MCF 10A (cell line): ENCODE measurements at regions of chr14 and their contacts with region 1.

Region 1: GRCh38 chr14:49946320-49947141 is 53.6 kb downstream of the ARF6 start:
- DNase-seq: peak; percentile 72
- H3K4me3 Mint-ChIP-seq: peak overlapping the region; percentile 42
- H3K27ac Mint-ChIP-seq: peak overlapping the region; percentile 81
- H3K4me1 Mint-ChIP-seq: peaks cover 38% of the 10 kb centered on the region
- H3K27me3 Mint-ChIP-seq: no peaks in the 10 kb centered on the region
- CTCF ChIP-seq: no peak

Region 2: GRCh38 chr14:49908432-49908781 is 38.1 kb before region 1 on chr14:
- CTCF ChIA-PET with region 1: interaction called, 6 read pairs
- POLR2A ChIA-PET with region 1: interaction called, 59 read pairs
- intact Hi-C with region 1: no loop called
- DNase-seq: no peak
- H3K4me3 Mint-ChIP-seq: peak overlapping the region; percentile 51
- H3K27ac Mint-ChIP-seq: peak overlapping the region; percentile 97
- H3K4me1 Mint-ChIP-seq: peaks cover 25% of the 10 kb centered on the region
- H3K27me3 Mint-ChIP-seq: no peaks in the 10 kb centered on the region
- CTCF ChIP-seq: no peak

Region 3: DNA sequence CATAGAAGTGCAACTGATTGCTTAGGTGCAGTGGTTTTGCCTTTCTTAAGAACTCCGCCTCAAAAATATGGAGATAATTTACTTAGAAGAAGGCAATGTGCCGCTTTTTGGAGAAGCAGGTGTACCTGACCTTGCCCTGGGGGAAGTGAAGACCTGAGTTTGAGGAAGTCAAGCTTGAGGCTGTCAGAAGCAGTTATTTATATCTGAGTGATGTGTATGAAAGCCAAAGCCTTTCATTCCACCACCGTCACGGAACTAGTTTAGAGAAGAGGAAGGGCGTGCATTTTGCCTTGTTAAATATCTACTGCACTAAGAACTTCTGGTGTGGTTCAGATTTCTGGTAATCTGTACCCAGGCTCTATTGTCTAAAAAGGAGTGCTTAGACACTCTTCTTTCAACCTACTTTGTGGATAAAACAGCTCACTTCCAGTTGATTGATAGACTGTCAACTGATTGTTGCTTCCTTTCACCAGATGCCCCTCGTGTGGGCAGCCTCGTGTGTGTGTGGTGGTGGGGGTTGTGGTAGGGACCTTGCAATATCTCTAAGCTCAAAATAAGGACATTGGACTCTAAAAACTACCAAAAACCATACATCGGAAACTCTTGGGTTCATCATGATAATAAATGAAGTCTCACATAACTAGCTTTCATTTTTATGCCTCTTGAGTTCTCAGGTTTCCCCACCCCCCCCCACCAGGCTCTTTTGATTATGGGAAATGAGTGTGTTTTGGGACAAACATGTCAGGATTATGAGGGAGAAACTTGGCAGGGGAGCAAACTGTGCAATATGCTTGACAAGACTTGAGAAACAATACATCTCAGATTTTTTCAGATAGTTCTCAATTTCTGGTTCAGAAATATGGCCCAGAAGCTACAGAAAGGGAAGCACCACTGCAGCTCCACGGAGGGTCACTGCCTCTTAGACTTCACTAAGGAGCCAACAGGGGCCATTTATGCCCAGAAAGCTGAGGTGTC is 24.9 kb after region 1 on chr14:
- CTCF ChIA-PET with region 1: interaction called, 11 read pairs
- POLR2A ChIA-PET with region 1: interaction called, 189 read pairs
- intact Hi-C with region 1: no loop called
- DNase-seq: peak; percentile 80
- H3K4me3 Mint-ChIP-seq: peak overlapping the region; percentile 58
- H3K27ac Mint-ChIP-seq: peak overlapping the region; percentile 89
- H3K4me1 Mint-ChIP-seq: peaks cover 48% of the 10 kb centered on the region
- H3K27me3 Mint-ChIP-seq: no peaks in the 10 kb centered on the region
- CTCF ChIP-seq: no peak

Region 4: DNA sequence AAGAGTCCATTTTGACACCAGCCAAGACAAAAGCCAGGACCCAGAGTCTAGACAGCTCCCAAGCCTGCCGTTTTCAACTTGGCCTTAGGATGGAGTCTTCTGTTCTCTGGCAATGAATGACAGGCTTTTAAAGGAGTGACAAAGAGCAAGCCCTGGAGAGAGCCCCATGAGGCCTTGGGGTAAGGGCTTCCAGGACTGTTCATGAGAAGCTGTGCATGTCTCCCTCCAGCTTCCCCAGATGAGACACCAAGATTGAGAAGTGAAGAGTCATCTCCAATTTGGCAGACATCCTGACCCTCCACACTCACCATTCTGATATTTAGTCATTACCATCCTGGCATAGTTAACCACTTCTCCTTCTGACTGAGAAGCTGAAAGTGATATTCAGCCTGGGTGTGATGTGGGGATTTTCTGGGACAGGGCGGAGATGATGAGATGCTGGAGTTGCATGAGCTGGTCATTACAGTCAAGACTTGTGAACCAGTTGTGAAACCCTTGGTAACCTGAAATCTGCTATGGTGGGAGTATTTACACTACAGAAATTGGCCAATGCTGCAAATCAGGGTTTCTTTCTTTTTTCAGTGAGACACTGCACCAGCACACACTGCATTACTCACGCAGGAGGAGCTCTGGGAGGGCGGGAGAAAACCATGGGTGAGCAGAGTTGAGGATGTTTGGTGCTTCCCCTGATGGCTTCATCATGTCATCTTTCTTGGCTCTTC is 92.0 kb after region 1 on chr14:
- CTCF ChIA-PET with region 1: interaction called, 7 read pairs
- POLR2A ChIA-PET with region 1: interaction called, 17 read pairs
- intact Hi-C with region 1: no loop called
- DNase-seq: peak; percentile 94
- H3K4me3 Mint-ChIP-seq: peak overlapping the region; percentile 40
- H3K27ac Mint-ChIP-seq: peak overlapping the region; percentile 89
- H3K4me1 Mint-ChIP-seq: peaks cover 43% of the 10 kb centered on the region
- H3K27me3 Mint-ChIP-seq: no peaks in the 10 kb centered on the region
- CTCF ChIP-seq: peak; percentile 16

Region 5: DNA sequence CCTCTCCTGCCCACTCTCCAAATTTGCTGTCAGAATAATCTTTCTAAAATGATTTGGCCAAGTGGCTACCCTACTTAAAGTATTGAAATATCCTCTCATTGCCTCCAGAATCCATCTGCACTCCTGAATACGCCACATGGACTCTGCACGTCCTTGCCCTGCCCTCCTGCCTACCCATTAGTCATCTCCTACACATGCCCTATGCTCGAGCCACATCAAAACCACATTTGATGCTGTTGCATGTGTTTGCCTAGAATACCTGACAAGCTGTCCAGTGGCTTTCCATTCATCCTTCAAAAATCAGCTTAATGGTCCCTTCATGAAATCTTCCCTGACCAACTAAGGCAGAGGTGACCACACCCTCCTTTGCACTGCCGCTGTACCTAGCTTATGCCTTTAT is 152.8 kb after region 1 on chr14:
- CTCF ChIA-PET with region 1: interaction called, 5 read pairs
- POLR2A ChIA-PET with region 1: interaction called, 10 read pairs
- intact Hi-C with region 1: no loop called
- DNase-seq: peak; percentile 47
- H3K4me3 Mint-ChIP-seq: no peak overlapping the region
- H3K27ac Mint-ChIP-seq: peak overlapping the region; percentile 33
- H3K4me1 Mint-ChIP-seq: peaks cover 11% of the 10 kb centered on the region
- H3K27me3 Mint-ChIP-seq: no peaks in the 10 kb centered on the region
- CTCF ChIP-seq: no peak

Region 6: DNA sequence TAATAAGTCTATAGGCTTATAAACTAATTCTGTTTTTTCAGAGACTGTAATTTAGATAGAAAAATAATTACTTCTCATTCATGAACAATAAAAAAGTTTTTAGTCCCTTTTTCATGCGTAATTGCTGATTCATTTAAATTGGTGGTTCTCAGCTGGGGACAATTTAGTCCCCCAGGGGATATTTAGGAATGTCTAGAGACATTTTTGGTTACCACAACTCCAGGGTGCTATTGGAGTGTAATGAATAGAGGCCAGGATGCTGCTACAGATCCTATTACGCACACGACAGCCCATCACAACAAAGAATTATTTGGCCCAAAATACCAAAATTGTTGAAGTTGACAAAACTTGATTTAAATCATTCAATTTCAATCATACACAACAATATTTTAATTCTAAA is 192.7 kb after region 1 on chr14:
- CTCF ChIA-PET with region 1: no interaction called
- POLR2A ChIA-PET with region 1: no interaction called
- intact Hi-C with region 1: no loop called
- DNase-seq: no peak
- H3K4me3 Mint-ChIP-seq: no peak overlapping the region
- H3K27ac Mint-ChIP-seq: no peak overlapping the region
- H3K4me1 Mint-ChIP-seq: no peaks in the 10 kb centered on the region
- H3K27me3 Mint-ChIP-seq: no peaks in the 10 kb centered on the region
- CTCF ChIP-seq: no peak